Dorsolateral prefrontal cortex (tissue), 120 donors: ENCODE measurements at regions of chr6 and their contacts with region 1.

Region 1: GRCh38 chr6:158752613-158753012 is 66.6 kb downstream of the EZR start:
- DNase-seq: peak; percentile 76 to 93 (median 86)
- H3K4me3 ChIP-seq: peak overlapping the region in 3 of 59 donors; percentile 2 to 30 (median 28)
- H3K27ac ChIP-seq: peak overlapping the region in 10 of 59 donors; percentile 10 to 66 (median 35)
- H3K27me3 ChIP-seq: no peaks in the 10 kb centered on the region
- CTCF ChIP-seq: peak in 47 of 56 donors; percentile 3 to 68 (median 42)

Region 2: GRCh38 chr6:158255275-158255988 is 497.2 kb before region 1 on chr6:
- intact Hi-C with region 1: no loop called
- DNase-seq: no peak
- H3K4me3 ChIP-seq: no peak overlapping the region
- H3K27ac ChIP-seq: peak overlapping the region in 20 of 59 donors; percentile 2 to 81 (median 34)
- H3K27me3 ChIP-seq: no peaks in the 10 kb centered on the region
- CTCF ChIP-seq: no peak

Region 3: GRCh38 chr6:158718461-158719046 is 34.1 kb before region 1 on chr6:
- intact Hi-C with region 1: loop called in 1 of 2 experiments (anchors 5 kb)
- DNase-seq: peak in 2 of 10 donors; percentile 12 to 26
- H3K4me3 ChIP-seq: no peak overlapping the region
- H3K27ac ChIP-seq: no peak overlapping the region
- H3K27me3 ChIP-seq: no peaks in the 10 kb centered on the region
- CTCF ChIP-seq: peak in 52 of 56 donors; percentile 36 to 78 (median 58)

Region 4: GRCh38 chr6:159125014-159125609 is 372.5 kb after region 1 on chr6:
- intact Hi-C with region 1: loop called in 1 of 2 experiments (anchors 5 kb)
- DNase-seq: no peak
- H3K4me3 ChIP-seq: no peak overlapping the region
- H3K27ac ChIP-seq: peak overlapping the region in 53 of 59 donors; percentile 16 to 96 (median 81)
- H3K27me3 ChIP-seq: no peaks in the 10 kb centered on the region
- CTCF ChIP-seq: peak in 50 of 56 donors; percentile 11 to 64 (median 44)

Region 5: GRCh38 chr6:159334068-159334467 is 581.5 kb after region 1 on chr6:
- intact Hi-C with region 1: no loop called
- DNase-seq: no peak
- H3K4me3 ChIP-seq: no peak overlapping the region
- H3K27ac ChIP-seq: no peak overlapping the region
- H3K27me3 ChIP-seq: peaks cover 0 to 7% (median 0%) of the 10 kb centered on the region in 45 donors
- CTCF ChIP-seq: no peak